Activated naive CD4-positive, alpha-beta T cell treated with anti-CD3 and anti-CD28 coated beads for 36 hours (primary cell): ENCODE measurements at regions of chr6 and their contacts with region 1.

Region 1: GRCh38 chr6:21593412-21593926 is at the start of gene SOX4:
- DNase-seq: peak; percentile 68
- H3K4me3 Mint-ChIP-seq: no peak within 1 kb of the TSS
- H3K27ac Mint-ChIP-seq: no peak within 1 kb of the TSS
- H3K4me1 Mint-ChIP-seq: peaks cover 22% of the 10 kb centered on the region
- H3K27me3 Mint-ChIP-seq: peaks cover 50% of the 10 kb centered on the region
- total RNA-seq, gene SOX4: 0.69 to 0.72 TPM

Region 2: DNA sequence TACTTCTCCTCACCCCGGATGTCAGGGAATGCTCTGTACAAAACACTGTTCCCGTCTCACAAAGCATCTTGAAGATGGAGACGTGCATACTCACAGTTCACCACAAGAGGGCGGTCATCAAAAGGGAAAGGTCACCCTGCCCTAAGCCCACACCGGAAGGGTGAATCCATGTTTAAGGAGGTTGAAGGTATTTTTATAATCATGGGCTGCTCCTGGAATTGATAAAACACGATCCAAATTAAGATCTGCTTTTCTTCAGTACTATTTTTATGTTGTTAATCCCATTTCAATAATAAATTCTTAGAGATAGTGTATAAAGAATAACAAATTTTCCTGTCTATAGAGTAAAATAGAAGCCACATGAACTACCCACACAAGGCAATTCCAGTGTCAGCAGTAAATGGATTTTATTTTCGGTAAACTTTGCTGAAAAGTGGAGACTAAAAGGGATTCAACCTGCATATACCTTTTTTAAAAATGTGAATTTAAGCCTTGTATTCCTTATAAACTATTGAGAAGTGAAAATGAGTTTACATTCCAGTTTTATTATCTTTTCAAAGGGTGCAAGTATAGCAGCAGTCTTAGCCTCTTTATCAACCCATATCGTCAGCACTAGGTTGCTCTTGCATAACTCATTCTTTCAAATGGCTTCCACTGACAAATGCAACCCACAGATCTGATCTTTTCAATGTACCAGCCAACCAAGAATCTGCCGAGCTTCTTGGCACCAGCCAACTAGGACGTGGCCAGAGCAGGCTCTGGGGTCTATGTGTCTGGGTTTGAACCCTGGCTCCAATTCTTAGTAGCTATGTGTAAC is 1301.5 kb before region 1 on chr6:
- CTCF ChIA-PET with region 1: interaction called, 4 read pairs
- intact Hi-C with region 1: loop called (anchors 5 kb)
- DNase-seq: peak; percentile 90
- H3K4me3 Mint-ChIP-seq: no peak overlapping the region
- H3K27ac Mint-ChIP-seq: no peak overlapping the region
- H3K4me1 Mint-ChIP-seq: peaks cover 16% of the 10 kb centered on the region
- H3K27me3 Mint-ChIP-seq: no peaks in the 10 kb centered on the region

Region 3: GRCh38 chr6:20708367-20709124 is 884.9 kb before region 1 on chr6:
- CTCF ChIA-PET with region 1: no interaction called
- intact Hi-C with region 1: loop called (anchors 10 kb)
- DNase-seq: peak; percentile 62
- H3K4me3 Mint-ChIP-seq: no peak overlapping the region
- H3K27ac Mint-ChIP-seq: no peak overlapping the region
- H3K4me1 Mint-ChIP-seq: peaks cover 54% of the 10 kb centered on the region
- H3K27me3 Mint-ChIP-seq: no peaks in the 10 kb centered on the region

Region 4: GRCh38 chr6:21438237-21438985 is 155.1 kb before region 1 on chr6:
- CTCF ChIA-PET with region 1: interaction called, 3 read pairs
- intact Hi-C with region 1: loop called (anchors 2 kb)
- DNase-seq: peak; percentile 68
- H3K4me3 Mint-ChIP-seq: no peak overlapping the region
- H3K27ac Mint-ChIP-seq: no peak overlapping the region
- H3K4me1 Mint-ChIP-seq: peaks cover 15% of the 10 kb centered on the region
- H3K27me3 Mint-ChIP-seq: peaks cover 5% of the 10 kb centered on the region

Region 5: DNA sequence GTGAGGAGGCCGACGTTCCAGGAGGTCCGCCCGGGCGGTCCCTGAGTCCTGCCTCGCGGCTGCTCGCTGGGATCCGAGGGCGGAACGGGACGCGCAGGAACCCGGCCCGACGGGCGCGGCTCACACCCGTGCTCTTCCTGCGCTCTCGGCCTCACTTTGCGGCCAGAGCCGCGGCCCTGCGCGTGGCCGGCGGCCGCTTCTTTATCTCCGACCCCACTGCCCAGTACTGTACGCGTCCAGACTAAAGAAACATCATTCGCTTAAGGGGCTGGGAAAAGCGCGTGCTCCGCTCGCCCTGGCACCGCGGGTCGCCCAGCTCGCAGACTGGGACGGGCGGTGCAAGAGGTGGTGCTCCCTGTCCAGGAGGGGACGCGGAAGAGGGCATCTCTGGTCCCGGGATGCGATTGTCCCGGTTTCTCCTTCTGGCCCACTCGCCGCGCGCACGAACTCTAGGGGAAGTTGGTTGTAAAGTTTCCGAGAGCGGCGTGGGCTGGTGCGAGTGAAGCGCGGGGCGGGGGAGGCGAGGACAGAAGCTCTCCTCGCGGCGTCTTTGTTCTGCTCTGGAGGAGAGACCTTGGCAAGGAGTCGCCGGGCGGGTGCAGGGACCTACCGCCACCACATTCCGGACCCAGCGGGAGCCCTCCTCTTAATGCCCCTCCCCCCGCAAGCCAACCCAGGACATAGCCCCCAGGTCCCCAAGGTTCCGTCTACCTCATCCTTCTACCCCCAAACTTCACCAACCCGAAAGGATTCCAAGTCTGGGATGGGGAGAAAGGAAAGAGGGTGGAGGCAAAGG is 71.0 kb after region 1 on chr6:
- CTCF ChIA-PET with region 1: no interaction called
- intact Hi-C with region 1: loop called (anchors 2 kb)
- DNase-seq: peak; percentile 20
- H3K4me3 Mint-ChIP-seq: peak overlapping the region; percentile 32
- H3K27ac Mint-ChIP-seq: no peak overlapping the region
- H3K4me1 Mint-ChIP-seq: peaks cover 27% of the 10 kb centered on the region
- H3K27me3 Mint-ChIP-seq: peaks cover 67% of the 10 kb centered on the region

Region 6: GRCh38 chr6:21710908-21711627 is 117.6 kb after region 1 on chr6:
- CTCF ChIA-PET with region 1: no interaction called
- intact Hi-C with region 1: no loop called
- DNase-seq: no peak
- H3K4me3 Mint-ChIP-seq: no peak overlapping the region
- H3K27ac Mint-ChIP-seq: no peak overlapping the region
- H3K4me1 Mint-ChIP-seq: no peaks in the 10 kb centered on the region
- H3K27me3 Mint-ChIP-seq: peaks cover 10% of the 10 kb centered on the region

Region 7: GRCh38 chr6:21935561-21936028 is 342.1 kb after region 1 on chr6:
- CTCF ChIA-PET with region 1: no interaction called
- intact Hi-C with region 1: loop called (anchors 2 kb)
- DNase-seq: peak; percentile 38
- H3K4me3 Mint-ChIP-seq: no peak overlapping the region
- H3K27ac Mint-ChIP-seq: no peak overlapping the region
- H3K4me1 Mint-ChIP-seq: no peaks in the 10 kb centered on the region
- H3K27me3 Mint-ChIP-seq: no peaks in the 10 kb centered on the region

Region 8: DNA sequence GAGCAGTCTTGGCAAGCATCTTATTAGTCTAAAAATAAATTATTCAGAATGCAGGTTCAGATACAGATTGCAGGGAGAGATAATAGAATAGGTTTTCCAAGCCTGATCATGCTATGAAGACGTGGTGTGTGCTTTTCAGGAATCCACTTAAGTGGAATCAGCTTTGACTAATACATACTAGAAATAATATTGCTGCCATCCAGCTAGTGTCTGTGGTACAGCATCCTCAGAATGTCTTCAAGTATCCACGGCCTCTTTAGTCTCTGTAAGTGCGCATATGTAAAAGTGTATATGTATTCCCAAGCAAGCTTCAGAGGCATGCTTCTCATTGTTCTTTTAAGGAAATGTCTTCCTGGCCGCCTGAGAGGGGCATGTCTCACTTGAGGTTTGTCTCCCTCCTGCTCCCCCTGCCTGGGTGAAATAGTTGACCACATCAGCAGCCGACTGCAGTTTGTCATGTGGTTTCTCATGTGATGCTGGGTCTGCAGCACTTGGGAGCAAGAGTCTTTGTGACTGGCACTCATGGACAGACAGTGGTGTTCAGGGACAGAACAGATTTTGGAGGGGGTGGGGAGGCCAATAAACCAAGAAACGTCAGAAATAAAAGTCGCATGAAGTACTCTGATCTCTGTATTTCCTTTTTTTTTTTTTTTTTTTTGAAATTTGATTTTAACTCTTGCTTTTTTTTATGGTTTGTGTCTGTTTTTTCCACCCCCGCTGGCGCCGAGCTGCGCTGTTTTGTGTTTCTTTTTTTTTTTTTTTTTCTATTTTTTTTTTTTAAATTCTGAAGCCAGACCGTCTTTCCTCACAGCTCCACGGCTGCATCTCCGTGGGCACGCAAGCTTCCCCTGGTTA is 552.6 kb after region 1 on chr6:
- CTCF ChIA-PET with region 1: no interaction called
- intact Hi-C with region 1: loop called (anchors 5 kb)
- DNase-seq: peak; percentile 5
- H3K4me3 Mint-ChIP-seq: peak overlapping the region; percentile 47
- H3K27ac Mint-ChIP-seq: no peak overlapping the region
- H3K4me1 Mint-ChIP-seq: peaks cover 7% of the 10 kb centered on the region
- H3K27me3 Mint-ChIP-seq: peaks cover 39% of the 10 kb centered on the region